Natural killer cell (primary cell): ENCODE measurements at regions of chr11 and their contacts with region 1.

Region 1: DNA sequence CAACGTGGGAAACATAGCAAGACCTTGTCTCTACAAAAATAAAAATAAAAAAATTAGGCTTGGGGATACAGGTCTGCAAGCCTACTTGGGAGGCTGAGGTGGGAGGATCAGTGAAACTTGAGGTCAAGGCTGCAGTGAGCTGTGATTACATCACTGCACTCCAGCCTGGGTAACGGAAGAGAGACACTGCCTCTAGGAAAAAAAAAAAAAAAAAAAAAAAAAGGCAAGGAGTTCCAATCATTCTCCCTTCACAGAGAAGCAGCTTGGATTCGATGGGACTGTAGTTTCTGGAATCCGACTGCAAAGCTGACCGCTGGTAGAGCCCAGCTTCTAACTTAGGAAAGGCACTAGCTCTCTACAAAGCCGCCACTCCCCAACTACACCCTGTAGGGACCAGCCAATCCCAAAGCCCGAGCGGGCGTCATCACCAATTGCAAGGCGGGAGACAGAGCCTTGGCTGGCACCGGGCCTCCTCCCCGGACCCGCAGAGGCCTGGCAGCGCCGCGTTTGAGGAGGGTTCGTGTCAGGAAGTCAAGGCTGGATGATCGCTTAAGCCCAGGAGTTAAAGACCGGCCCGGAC is 699 bp upstream of the DDB2 start:
- DNase-seq: peak; percentile 65 to 89
- ATAC-seq: peak; percentile 67 to 90 (median 82)
- H3K4me3 ChIP-seq: peak overlapping the region; percentile 98
- H3K4me3 Mint-ChIP-seq: peak overlapping the region; percentile 99
- H3K27ac ChIP-seq: peak overlapping the region; percentile 96
- H3K27ac Mint-ChIP-seq: peak overlapping the region; percentile 95 to 98
- H3K4me1 ChIP-seq: peaks cover 32% of the 10 kb centered on the region
- H3K4me1 Mint-ChIP-seq: peaks cover 30 to 36% of the 10 kb centered on the region in 2 donors
- H3K27me3 ChIP-seq: no peaks in the 10 kb centered on the region
- H3K27me3 Mint-ChIP-seq: no peaks in the 10 kb centered on the region
- CTCF ChIP-seq: no peak

Region 2: DNA sequence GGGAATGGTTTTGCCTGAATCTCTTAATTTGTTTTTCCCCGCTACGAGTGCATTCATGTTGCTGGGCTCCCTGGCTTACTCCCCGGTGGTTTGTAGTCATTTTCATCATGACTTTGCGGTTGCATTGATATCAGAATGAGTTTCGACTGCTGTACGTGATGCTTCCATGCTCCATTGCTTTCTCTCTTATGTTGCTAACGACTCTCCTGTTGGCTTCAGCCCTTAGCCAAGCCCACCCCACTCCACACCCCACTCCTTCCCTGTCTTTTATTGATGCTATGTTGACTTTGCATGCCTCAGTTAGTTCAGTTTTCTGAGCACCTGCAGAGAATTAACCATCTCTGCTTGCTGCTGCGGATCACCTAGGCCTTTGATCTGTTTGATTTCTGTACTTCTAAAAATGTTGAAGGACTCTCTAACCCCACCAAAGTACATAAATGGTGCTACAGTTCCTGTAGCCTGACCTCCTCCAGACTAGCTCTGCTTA is 102.7 kb before region 1 on chr11:
- intact Hi-C with region 1: no loop called
- DNase-seq: no peak
- ATAC-seq: no peak
- H3K4me3 ChIP-seq: no peak overlapping the region
- H3K4me3 Mint-ChIP-seq: no peak overlapping the region
- H3K27ac ChIP-seq: no peak overlapping the region
- H3K27ac Mint-ChIP-seq: no peak overlapping the region
- H3K4me1 ChIP-seq: no peaks in the 10 kb centered on the region
- H3K4me1 Mint-ChIP-seq: no peaks in the 10 kb centered on the region
- H3K27me3 ChIP-seq: no peaks in the 10 kb centered on the region
- H3K27me3 Mint-ChIP-seq: no peaks in the 10 kb centered on the region
- CTCF ChIP-seq: no peak

Region 3: GRCh38 chr11:47269002-47269828 is 55.1 kb after region 1 on chr11:
- intact Hi-C with region 1: loop called (anchors 1 kb)
- DNase-seq: peak; percentile 79 to 91
- ATAC-seq: peak; percentile 54 to 82 (median 68)
- H3K4me3 ChIP-seq: peak overlapping the region; percentile 58
- H3K4me3 Mint-ChIP-seq: peak overlapping the region; percentile 92
- H3K27ac ChIP-seq: peak overlapping the region; percentile 94
- H3K27ac Mint-ChIP-seq: peak overlapping the region; percentile 76 to 87
- H3K4me1 ChIP-seq: peaks cover 54% of the 10 kb centered on the region
- H3K4me1 Mint-ChIP-seq: peaks cover 54 to 56% of the 10 kb centered on the region in 2 donors
- H3K27me3 ChIP-seq: no peaks in the 10 kb centered on the region
- H3K27me3 Mint-ChIP-seq: no peaks in the 10 kb centered on the region
- CTCF ChIP-seq: no peak